ENCODE measurements at regions of chrX and their contacts with region 1.

Region 1: GRCh38 chrX:104136241-104137019 is 20.4 kb downstream of the SLC25A53 start:
- DNase-seq: peak; percentile 33 to 45
- H3K4me3 ChIP-seq: no peak overlapping the region
- H3K27ac ChIP-seq: no peak overlapping the region
- H3K4me1 ChIP-seq: no peaks in the 10 kb centered on the region
- H3K27me3 ChIP-seq: no peaks in the 10 kb centered on the region
- CTCF ChIP-seq: peak; percentile 80

Region 2: DNA sequence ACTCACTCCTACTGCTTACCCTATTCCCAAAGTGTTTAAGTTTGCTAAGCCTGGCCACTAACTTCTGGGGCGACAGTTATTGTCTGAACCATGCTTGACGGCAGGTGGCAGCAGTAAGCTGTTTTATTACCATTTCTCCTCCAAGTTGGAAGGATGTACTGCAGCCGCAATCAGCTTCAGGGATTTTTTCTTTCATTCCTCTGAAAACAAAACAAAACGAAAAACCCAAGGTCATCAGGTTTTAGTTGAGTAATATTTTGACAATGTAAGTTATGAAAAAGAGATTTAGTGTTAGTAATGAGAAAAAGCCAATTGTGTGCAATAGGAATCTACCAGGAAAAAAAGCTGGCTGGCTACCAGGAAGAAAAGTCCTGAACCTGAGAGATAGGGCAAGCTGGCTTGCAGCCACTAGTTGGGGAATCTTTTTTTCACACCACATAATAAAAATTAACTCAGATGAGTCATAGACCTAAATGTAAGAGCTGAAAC is 291.2 kb before region 1 on chrX:
- CTCF ChIA-PET with region 1: no interaction called
- POLR2A ChIA-PET with region 1: no interaction called
- intact Hi-C with region 1: loop called (anchors 2 kb)
- DNase-seq: peak; percentile 36 to 42
- H3K4me3 ChIP-seq: no peak overlapping the region
- H3K27ac ChIP-seq: no peak overlapping the region
- H3K4me1 ChIP-seq: no peaks in the 10 kb centered on the region
- H3K27me3 ChIP-seq: 0 out of 2 replicates have a peak, but pooled peaks cover 5% of the 10 kb centered on the region
- CTCF ChIP-seq: peak; percentile 70

Region 3: GRCh38 chrX:103889231-103889630 is 247.2 kb before region 1 on chrX:
- CTCF ChIA-PET with region 1: no interaction called
- POLR2A ChIA-PET with region 1: no interaction called
- intact Hi-C with region 1: no loop called
- DNase-seq: no peak
- H3K4me3 ChIP-seq: no peak overlapping the region
- H3K27ac ChIP-seq: no peak overlapping the region
- H3K4me1 ChIP-seq: no peaks in the 10 kb centered on the region
- H3K27me3 ChIP-seq: no peaks in the 10 kb centered on the region
- CTCF ChIP-seq: no peak

Region 4: DNA sequence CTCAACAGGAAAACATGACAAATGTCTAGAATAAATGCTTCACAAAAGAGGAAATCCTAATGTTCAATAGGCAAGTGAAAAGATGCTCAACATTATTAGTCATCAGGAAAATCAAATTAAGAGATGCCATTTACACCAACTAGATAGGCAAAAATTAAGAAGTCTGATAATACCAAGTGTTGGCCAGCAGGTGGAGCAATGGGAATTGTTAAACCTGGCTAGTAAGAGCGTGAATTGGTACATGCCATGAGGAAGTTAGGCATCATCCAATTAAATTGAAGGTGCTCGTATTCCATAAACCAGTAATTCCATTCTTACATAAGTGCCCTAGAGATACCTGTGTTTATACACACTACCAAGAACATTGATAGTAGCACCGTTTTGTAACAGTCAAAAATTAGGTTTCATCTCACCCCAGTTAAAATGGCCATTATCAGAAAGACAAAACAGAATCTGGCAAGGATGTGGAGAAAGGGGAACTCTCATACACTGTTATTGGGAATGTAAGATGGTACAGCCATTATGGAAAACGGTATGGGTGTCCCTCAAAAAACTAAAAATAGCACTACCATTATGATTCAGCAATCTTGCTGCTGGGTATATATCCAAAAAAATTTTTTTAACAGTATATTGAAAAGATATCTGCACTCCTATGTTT is 38.1 kb before region 1 on chrX:
- CTCF ChIA-PET with region 1: no interaction called
- POLR2A ChIA-PET with region 1: no interaction called
- intact Hi-C with region 1: loop called (anchors 1 kb)
- DNase-seq: peak; percentile 26 to 63
- H3K4me3 ChIP-seq: no peak overlapping the region
- H3K27ac ChIP-seq: no peak overlapping the region
- H3K4me1 ChIP-seq: no peaks in the 10 kb centered on the region
- H3K27me3 ChIP-seq: peaks cover 43% of the 10 kb centered on the region
- CTCF ChIP-seq: peak; percentile 71

Region 5: DNA sequence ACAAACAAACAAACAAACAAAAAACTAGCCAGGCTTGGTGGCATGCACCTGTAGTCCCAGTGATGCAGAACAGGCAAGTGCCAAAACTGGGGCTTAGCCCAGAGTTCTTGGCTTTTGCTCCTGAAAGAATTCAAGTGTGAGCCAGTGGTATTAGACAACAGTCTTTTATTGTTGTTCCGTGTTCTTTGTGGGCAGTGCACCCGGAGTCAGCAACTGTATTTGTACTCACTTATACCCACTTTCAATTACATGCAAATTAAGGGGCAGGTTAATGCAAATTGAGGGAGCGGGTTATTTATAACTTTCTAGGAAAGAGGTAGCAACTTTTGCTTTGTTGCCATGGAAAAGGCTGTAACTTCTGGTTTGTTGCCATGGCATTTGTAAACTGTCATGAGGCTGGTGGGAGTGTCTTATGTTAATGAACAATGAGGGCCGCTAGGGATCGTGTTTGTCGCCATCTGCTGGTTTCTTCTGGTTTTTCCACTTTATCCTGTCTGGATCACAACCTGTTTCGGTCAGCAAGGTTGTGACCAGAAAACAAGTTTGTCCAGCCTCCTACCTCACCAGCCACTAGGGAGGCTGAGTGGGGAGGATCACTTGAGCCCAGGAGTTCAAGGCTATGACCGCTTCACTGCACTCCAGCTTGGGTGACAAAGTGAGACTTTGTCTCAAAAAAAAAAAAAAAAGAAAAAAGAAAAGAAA is 207.1 kb after region 1 on chrX:
- CTCF ChIA-PET with region 1: no interaction called
- POLR2A ChIA-PET with region 1: no interaction called
- intact Hi-C with region 1: no loop called
- DNase-seq: peak; percentile 53 to 81
- H3K4me3 ChIP-seq: no peak overlapping the region
- H3K27ac ChIP-seq: peak overlapping the region; percentile 16; the same call in 1 of the 2 replicates
- H3K4me1 ChIP-seq: peaks cover 8% of the 10 kb centered on the region; the same call in 1 of the 2 replicates
- H3K27me3 ChIP-seq: no peaks in the 10 kb centered on the region
- CTCF ChIP-seq: peak; percentile 70

Measured in PC-9 (cell line).